ENCODE measurements at regions of chr12 and their contacts with region 1.

Region 1: GRCh38 chr12:95942524-95943329 is at the start of gene CCDC38:
- DNase-seq: peak; percentile 56 to 86 (median 82)
- ATAC-seq: peak; percentile 97
- H3K4me3 ChIP-seq: peak within 1 kb of the TSS; percentile 93
- H3K4me3 Mint-ChIP-seq: peak within 1 kb of the TSS; percentile 88 to 99 (median 96)
- H3K27ac ChIP-seq: peak within 1 kb of the TSS; percentile 86
- H3K27ac Mint-ChIP-seq: peak within 1 kb of the TSS; percentile 85 to 97 (median 89)
- H3K4me1 ChIP-seq: peaks cover 6% of the 10 kb centered on the region in 2 donors
- H3K4me1 Mint-ChIP-seq: peaks cover 4 to 12% (median 10%) of the 10 kb centered on the region in 7 donors
- H3K27me3 ChIP-seq: no peaks in the 10 kb centered on the region
- H3K27me3 Mint-ChIP-seq: peaks cover 0 to 26% (median 0%) of the 10 kb centered on the region in 5 donors
- total RNA-seq, gene CCDC38: 0.07 to 0.27 TPM in 2 of 5 experiments, not detected in the others

Region 2: DNA sequence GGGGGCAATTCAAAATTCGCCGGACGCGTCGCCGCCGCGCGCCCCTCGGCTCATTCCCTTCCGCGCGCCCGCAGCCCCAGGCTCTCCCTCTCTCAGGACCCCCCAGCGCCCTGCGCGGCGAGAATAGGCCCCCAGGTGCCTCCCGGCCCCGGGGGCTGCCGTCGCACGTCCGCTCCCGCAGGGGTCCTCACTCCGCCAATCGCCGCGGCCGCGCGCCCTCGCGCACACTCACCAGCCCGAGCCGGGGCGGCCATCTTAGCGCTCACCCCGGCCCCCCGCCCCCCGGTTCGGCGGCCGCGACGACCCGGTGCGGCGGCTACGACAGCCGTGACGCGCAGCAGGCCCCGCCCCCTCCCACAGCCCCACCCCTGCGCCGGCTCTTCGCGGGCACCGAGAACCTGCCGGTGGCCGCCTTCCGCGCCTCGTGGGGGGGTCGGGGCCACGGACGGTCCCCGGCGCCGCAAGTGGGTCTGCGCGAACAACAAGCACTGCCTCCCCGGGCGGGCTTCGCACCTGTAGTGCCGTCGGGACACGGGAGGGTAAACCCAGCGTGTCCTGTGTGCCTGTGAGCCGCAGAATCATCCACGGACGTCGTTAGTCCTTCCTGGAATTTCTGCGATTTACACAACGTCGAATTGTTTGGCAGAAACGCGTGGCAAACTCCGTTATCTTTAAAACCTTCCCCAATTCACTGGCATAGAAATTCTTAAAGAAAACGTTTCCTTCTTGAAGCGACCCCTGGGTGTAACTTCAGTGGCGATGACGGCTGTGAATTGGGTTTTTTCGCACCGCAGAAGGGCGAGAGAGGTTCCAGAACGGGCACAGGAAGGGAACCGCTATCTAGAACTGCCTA is 394.0 kb before region 1 on chr12:
- CTCF ChIA-PET with region 1: no interaction called
- POLR2A ChIA-PET with region 1: no interaction called
- intact Hi-C with region 1: loop called in 1 of 2 experiments (anchors 2 kb)
- DNase-seq: peak; percentile 66 to 81 (median 77)
- ATAC-seq: peak; percentile 94
- H3K4me3 ChIP-seq: peak overlapping the region; percentile 75
- H3K4me3 Mint-ChIP-seq: peak overlapping the region; percentile 89 to 96 (median 94)
- H3K27ac ChIP-seq: peak overlapping the region; percentile 96
- H3K27ac Mint-ChIP-seq: peak overlapping the region; percentile 70 to 98 (median 94)
- H3K4me1 ChIP-seq: peaks cover 6 to 23% of the 10 kb centered on the region in 2 donors
- H3K4me1 Mint-ChIP-seq: peaks cover 36 to 73% (median 61%) of the 10 kb centered on the region in 7 donors
- H3K27me3 ChIP-seq: no peaks in the 10 kb centered on the region
- H3K27me3 Mint-ChIP-seq: peaks cover 0 to 22% (median 7%) of the 10 kb centered on the region in 5 donors

Region 3: GRCh38 chr12:95858479-95859343 is 84.0 kb before region 1 on chr12 and contains the start of gene SNRPF:
- CTCF ChIA-PET with region 1: no interaction called
- POLR2A ChIA-PET with region 1: no interaction called
- intact Hi-C with region 1: loop called (anchors 1 to 2 kb)
- DNase-seq: peak; percentile 88 to 96 (median 92)
- ATAC-seq: peak; percentile 98
- H3K4me3 ChIP-seq: peak within 1 kb of the TSS; percentile 82
- H3K4me3 Mint-ChIP-seq: no peak within 1 kb of the TSS
- H3K27ac ChIP-seq: peak within 1 kb of the TSS; percentile 86
- H3K27ac Mint-ChIP-seq: no peak within 1 kb of the TSS
- H3K4me1 ChIP-seq: peaks cover 11 to 12% of the 10 kb centered on the region in 2 donors
- H3K4me1 Mint-ChIP-seq: peaks cover 13 to 27% (median 16%) of the 10 kb centered on the region in 7 donors
- H3K27me3 ChIP-seq: no peaks in the 10 kb centered on the region
- H3K27me3 Mint-ChIP-seq: peaks cover 3 to 11% (median 7%) of the 10 kb centered on the region in 5 donors
- total RNA-seq, gene SNRPF: 19.0 to 40.4 (median 21.7) TPM

Region 4: DNA sequence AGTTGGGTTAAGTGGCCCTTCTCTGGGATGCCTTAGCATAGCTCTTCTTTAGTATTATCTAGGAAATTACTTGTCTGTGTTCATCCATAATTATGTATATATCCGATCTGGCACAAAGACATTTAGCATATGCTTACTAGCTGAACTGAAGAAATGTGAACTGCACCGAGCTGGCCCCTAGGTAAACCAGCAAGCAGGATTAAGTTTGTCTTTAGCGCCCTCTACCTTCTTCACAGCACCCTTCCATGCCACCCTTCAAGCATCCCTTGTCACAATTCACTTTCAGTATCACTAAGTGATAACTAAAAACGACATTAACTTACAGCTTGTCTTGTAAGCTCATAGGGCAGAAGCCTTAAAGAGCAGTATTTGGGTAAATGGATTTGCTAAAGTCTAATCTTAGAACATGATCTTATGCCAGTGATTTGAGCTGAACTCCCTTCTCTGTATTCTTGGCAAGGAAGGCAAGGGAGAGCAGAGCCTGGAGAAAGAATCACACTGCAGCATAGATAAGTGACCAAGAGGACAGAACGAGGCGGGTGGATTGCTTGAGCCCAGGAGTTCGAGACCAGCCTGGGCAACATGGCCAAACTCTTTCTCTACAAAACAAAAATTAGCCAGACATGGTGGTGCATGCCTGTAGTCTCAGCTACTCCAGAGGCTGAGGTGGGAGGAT is 56.0 kb after region 1 on chr12:
- CTCF ChIA-PET with region 1: interaction called, 4 read pairs
- POLR2A ChIA-PET with region 1: no interaction called
- intact Hi-C with region 1: loop called in 1 of 2 experiments (anchors 2 kb)
- DNase-seq: peak in 7 of 9 donors; percentile 44 to 69 (median 58)
- ATAC-seq: peak; percentile 96
- H3K4me3 ChIP-seq: no peak overlapping the region
- H3K4me3 Mint-ChIP-seq: peak overlapping the region in 1 of 10 donors; percentile 11
- H3K27ac ChIP-seq: no peak overlapping the region
- H3K27ac Mint-ChIP-seq: peak overlapping the region in 5 of 9 donors; percentile 2 to 68 (median 16)
- H3K4me1 ChIP-seq: no peaks in the 10 kb centered on the region
- H3K4me1 Mint-ChIP-seq: peaks cover 0 to 13% (median 3%) of the 10 kb centered on the region in 7 donors
- H3K27me3 ChIP-seq: no peaks in the 10 kb centered on the region
- H3K27me3 Mint-ChIP-seq: no peaks in the 10 kb centered on the region

Region 5: DNA sequence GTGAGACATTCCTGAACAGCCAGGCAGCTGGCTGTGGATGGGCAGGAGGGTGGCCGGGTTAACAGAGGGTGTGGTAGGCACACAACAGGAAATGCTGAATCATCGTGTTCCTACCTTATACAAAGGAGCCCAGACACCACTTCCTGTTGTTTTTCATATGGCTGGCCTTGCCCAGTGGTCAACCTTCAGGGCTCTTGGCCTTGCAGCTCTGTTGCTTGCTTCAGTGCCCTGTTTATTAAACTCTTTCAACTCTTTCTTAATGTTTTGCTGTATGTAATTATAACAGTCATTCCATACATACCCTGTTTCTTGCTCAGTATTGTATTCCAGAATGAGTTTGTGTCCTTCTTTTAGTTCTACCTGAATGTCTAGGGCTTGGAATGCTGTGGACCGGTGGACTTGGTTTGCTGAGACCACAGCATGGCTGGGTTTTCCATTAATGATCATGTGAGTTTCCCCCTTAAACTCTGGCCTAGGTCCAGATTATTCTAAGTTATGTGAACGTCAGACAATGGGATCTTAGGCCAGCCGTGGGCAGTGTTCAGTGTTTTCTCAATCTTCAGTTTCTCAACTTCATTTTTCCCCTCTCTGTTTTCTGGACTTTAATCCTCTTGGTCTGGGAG is 558.5 kb after region 1 on chr12:
- CTCF ChIA-PET with region 1: no interaction called
- POLR2A ChIA-PET with region 1: no interaction called
- intact Hi-C with region 1: loop called in 1 of 2 experiments (anchors 10 kb)
- DNase-seq: peak in 1 of 9 donors; percentile 29
- ATAC-seq: peak; percentile 80
- H3K4me3 ChIP-seq: no peak overlapping the region
- H3K4me3 Mint-ChIP-seq: peak overlapping the region in 9 of 10 donors; percentile 18 to 66 (median 48)
- H3K27ac ChIP-seq: no peak overlapping the region
- H3K27ac Mint-ChIP-seq: peak overlapping the region; percentile 28 to 89 (median 63)
- H3K4me1 ChIP-seq: peaks cover 22 to 35% of the 10 kb centered on the region in 2 donors
- H3K4me1 Mint-ChIP-seq: peaks cover 29 to 60% (median 42%) of the 10 kb centered on the region in 7 donors
- H3K27me3 ChIP-seq: no peaks in the 10 kb centered on the region
- H3K27me3 Mint-ChIP-seq: no peaks in the 10 kb centered on the region